Adrenal gland (tissue), 19 donors: ENCODE measurements at regions of chr11 and their contacts with region 1.

Region 1: GRCh38 chr11:94504689-94505293 is 7.5 kb upstream of the C11orf97 start:
- DNase-seq: no peak
- H3K4me3 ChIP-seq: no peak overlapping the region
- H3K27ac ChIP-seq: no peak overlapping the region
- H3K4me1 ChIP-seq: no peaks in the 10 kb centered on the region
- H3K27me3 ChIP-seq: no peaks in the 10 kb centered on the region
- CTCF ChIP-seq: peak; percentile 54 to 80 (median 58)
- POLR2A ChIP-seq: no peak

Region 2: GRCh38 chr11:93895106-93895862 is 609.5 kb before region 1 on chr11:
- intact Hi-C with region 1: loop called in 1 of 2 experiments (anchors 10 kb)
- DNase-seq: peak in 4 of 7 donors; percentile 20 to 34 (median 26)
- H3K4me3 ChIP-seq: no peak overlapping the region
- H3K27ac ChIP-seq: no peak overlapping the region
- H3K4me1 ChIP-seq: no peaks in the 10 kb centered on the region
- H3K27me3 ChIP-seq: no peaks in the 10 kb centered on the region
- CTCF ChIP-seq: peak; percentile 38 to 74 (median 67)
- POLR2A ChIP-seq: no peak

Region 3: DNA sequence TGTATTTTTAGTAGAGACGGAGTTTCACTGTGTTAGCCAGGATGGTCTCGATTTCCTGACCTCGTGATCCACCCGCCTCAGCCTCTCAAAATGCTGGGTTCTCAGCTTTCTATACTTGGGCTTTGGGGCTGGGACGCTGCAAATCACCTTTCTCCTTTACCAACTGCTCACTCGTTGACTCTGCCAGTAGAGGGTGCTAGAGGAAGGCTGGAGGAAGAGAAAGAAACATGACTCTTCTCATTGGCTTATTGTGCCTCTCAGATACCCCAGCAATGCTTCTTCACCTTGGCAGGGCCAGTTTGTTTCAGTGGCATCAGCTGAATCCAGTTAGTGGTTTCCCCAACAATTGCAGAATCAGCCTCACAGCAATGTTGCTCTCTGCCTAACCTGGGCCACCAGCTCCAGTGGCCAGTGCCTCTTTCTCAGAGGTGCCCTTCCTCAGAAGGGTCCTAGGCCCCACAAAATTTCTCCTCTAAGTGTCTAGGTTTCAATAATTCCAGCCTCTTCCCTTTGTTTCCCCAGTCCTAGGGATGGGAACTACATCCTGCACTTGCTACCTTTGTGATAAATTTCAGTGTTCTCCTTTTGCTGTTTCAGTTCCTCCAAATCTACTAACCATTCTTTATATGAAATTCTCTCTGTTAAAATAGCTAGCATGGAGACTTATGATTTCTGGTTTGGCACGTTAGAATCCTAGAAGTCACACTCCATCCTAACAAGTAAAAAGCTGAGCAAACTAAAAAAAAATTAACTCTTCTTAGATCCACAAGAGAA is 582.9 kb before region 1 on chr11:
- intact Hi-C with region 1: loop called in 1 of 2 experiments (anchors 10 kb)
- DNase-seq: peak; percentile 49 to 69 (median 55)
- H3K4me3 ChIP-seq: no peak overlapping the region
- H3K27ac ChIP-seq: no peak overlapping the region
- H3K4me1 ChIP-seq: no peaks in the 10 kb centered on the region
- H3K27me3 ChIP-seq: peaks cover 3% of the 10 kb centered on the region
- CTCF ChIP-seq: peak; percentile 32 to 70 (median 63)
- POLR2A ChIP-seq: no peak

Region 4: GRCh38 chr11:94171693-94172440 is 332.9 kb before region 1 on chr11:
- intact Hi-C with region 1: loop called in 1 of 2 experiments (anchors 10 kb)
- DNase-seq: peak in 4 of 7 donors; percentile 22 to 65 (median 33)
- H3K4me3 ChIP-seq: no peak overlapping the region
- H3K27ac ChIP-seq: no peak overlapping the region
- H3K4me1 ChIP-seq: peaks cover 0 to 5% of the 10 kb centered on the region in 2 donors
- H3K27me3 ChIP-seq: no peaks in the 10 kb centered on the region
- CTCF ChIP-seq: peak; percentile 17 to 59 (median 31)
- POLR2A ChIP-seq: no peak

Region 5: DNA sequence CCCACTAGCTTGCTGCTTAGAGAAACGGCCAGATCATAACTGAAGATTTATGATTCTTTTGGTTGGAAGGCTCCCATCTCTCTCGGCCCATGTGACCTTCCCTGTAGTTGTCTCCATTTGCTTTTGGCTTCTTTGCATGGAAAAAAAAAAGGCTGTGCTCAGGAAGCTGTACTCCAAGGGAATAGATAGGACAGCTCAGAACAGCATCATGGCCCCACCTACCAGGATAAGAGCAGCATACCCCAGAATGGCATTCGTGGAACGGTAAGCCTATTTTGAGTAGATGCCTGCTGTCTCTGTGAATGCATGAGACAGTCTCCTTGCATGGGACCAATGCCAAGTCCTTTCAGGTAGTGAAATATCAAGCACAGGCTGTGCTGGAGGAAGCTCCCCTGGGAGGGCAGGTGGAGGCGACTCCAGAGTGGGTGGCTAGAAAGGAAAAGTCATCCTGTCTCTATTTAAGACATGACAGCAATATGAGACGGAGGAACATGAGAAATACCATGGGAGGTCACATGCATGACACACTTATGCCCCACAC is 169.2 kb after region 1 on chr11:
- intact Hi-C with region 1: no loop called
- DNase-seq: peak in 4 of 7 donors; percentile 5 to 55 (median 18)
- H3K4me3 ChIP-seq: no peak overlapping the region
- H3K27ac ChIP-seq: peak overlapping the region in 1 of 5 donors; percentile 1
- H3K4me1 ChIP-seq: no peaks in the 10 kb centered on the region
- H3K27me3 ChIP-seq: no peaks in the 10 kb centered on the region
- CTCF ChIP-seq: no peak
- POLR2A ChIP-seq: no peak